Activated T-helper 2 cell treated with anti-CD3 and anti-CD28 coated beads, Interferon-gamma antibody, Interleukin-2, Interleukin-4, amounts not matched to agents 10 μg/mL and 5 μg/mL and 100 μg/mL, durations not matched to agents 14 hours and 24 hours and 36 hours (primary cell): ENCODE measurements at regions of chr5 and their contacts with region 1.

Region 1: DNA sequence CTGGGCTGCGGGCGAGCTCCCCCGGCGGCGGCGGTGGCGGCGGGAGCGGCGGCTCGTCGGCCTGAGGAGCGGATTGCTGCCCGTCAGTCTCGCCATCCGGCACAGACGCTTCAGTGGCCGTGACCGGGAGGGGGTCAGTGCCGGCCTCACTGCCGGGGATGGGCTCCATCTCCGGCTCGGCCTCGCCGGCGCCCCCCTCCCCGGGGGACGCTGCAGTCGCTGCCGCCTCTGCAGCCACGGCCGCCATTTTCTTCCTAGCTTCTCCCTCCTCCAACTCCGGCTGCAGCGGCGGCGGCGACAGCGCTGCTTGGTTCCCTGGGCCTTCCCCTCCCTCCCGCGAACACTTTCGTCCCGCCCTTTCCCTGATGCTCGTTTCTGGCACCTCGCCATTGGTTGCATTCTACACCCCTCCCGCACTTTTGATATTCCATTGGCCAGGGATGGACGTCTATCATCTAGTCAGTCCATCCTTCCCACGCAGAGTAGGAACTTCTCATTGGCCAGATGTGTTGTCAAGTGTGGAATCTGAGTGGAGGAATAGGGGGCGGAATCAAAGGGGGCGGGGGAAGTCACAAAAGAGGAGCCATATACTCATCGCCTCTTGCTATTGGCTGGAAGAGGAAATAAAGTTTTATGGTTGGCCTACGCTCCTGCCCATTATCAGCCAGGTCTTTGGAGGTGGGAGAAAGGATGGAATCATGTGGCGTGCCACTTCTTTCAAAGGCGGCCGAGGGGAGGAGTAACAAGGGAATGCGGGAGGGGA is at the start of gene PWWP2A:
- DNase-seq: peak; percentile 96
- H3K4me3 Mint-ChIP-seq: peak within 1 kb of the TSS; percentile 94
- H3K27ac Mint-ChIP-seq: peak within 1 kb of the TSS; percentile 94
- H3K4me1 Mint-ChIP-seq: peaks cover 13% of the 10 kb centered on the region
- H3K27me3 Mint-ChIP-seq: peaks cover 3% of the 10 kb centered on the region
- total RNA-seq, gene PWWP2A: 20.4 and 22.7 TPM in 2 replicates

Region 2: DNA sequence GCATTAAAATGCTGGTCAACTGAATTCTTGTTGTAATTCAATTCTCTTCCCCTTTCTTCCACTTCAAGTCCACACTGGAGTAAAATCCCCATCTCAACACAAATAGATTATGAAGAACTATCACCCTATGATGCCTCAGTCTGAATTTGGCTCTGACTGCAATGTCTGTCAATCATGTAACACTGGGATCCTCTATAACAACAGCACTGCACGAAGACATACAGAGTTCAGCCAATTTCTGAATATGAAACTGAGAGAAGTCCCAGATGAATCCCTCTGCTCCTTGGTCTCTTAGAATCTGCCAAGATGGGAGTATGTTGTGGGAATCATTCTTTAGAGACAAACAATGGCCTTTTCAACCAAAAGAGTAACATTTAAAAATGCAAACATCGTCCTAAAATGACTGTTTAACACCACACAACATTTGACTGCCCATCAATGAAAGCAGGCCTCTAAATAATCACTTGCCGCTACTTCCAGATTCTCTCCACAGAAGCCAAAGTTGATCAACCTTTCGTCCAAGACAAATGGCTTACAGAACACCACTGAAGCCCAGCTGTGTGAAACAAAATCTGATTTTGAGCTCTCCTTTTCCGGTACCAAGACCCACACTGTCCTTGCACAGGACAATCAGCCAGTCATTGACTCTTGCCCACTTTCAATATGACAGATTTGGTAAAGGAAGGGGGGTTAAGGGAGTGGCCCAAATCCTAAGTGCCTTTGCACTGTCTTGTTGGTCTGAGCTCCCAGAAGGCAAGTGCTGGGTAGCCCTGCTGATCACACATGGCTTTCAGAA is 1277.6 kb before region 1 on chr5:
- intact Hi-C with region 1: no loop called
- DNase-seq: no peak
- H3K4me3 Mint-ChIP-seq: no peak overlapping the region
- H3K27ac Mint-ChIP-seq: no peak overlapping the region
- H3K4me1 Mint-ChIP-seq: no peaks in the 10 kb centered on the region
- H3K27me3 Mint-ChIP-seq: peaks cover 3% of the 10 kb centered on the region

Region 3: DNA sequence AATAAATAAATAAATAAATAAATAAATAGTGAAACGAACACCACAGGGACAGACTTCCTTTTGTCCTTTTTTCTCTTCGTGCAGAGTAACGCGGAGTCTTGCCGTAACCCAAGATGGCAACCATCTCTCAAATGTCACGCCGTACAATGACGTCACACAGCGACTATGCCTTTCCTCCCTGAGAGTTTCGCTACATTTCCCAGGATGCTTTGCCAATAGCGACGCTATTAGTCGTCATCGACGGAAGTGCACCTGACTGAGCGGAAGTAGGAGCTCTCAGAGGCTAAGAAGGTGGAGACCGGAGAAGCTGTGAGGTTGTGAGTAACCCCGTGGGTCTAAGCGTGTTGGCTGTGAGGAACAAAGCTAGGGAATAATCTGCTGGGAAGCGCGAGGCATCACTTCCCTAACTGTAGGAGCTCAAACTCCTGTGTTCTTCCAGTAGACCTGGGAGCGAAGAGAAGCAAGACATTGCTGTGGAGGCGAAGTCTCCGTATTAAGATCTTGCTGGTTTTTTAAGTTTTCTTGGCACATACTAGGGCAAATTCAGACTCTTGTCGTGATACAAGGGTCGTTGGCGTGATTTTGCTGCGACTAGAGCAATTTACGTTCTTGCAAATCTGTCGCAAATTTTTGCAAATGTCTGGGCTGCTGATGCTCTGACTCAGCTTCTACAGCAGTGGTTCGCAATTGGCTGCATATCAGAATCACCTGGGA is 110.3 kb before region 1 on chr5 and contains the start of gene TTC1:
- intact Hi-C with region 1: loop called (anchors 1 kb)
- DNase-seq: peak; percentile 89
- H3K4me3 Mint-ChIP-seq: peak within 1 kb of the TSS; percentile 94
- H3K27ac Mint-ChIP-seq: peak within 1 kb of the TSS; percentile 92
- H3K4me1 Mint-ChIP-seq: peaks cover 19% of the 10 kb centered on the region
- H3K27me3 Mint-ChIP-seq: no peaks in the 10 kb centered on the region
- total RNA-seq, gene TTC1: 64.0 and 64.9 TPM in 2 replicates

Region 4: DNA sequence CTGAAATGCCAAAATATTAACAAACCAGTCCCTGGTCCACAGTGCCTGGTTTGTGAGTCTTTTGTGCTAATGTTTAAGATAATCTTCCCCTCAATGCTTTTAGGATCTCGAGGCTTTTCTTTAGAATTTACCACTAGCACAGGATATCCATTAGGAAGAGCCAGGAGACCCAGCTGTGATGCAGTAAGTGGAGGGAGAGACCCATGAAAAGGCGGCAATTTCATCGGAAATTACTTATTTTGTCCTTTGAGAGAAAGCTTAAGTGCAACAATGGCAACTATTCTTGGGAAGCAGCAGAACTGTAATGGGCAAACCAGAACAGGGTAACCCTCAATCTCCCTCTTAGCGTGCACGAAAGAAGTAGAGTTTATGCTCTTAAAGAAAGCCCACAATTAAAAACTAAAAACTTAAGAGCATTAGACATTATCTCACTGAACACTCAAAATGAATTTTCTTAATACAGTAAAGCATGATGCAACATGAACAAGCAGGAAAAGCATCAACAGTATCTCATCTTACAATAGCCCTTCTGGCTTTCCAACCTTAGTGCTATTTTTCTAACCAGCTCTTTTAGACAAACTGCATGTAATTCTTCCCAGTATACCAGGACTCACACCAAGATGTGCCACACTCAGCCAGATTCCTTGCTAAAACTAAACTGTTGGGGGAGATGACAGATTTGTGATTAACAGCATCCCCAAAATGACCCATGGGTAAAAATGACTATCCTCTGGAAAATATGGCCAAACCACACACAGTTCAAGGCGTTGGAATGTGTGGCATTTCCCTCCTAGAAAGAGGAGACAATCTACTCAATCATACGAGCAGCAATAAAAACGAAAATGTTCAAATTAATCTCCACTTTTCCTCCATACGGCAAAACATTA is 36.5 kb before region 1 on chr5:
- intact Hi-C with region 1: loop called (anchors 5 kb)
- DNase-seq: no peak
- H3K4me3 Mint-ChIP-seq: no peak overlapping the region
- H3K27ac Mint-ChIP-seq: no peak overlapping the region
- H3K4me1 Mint-ChIP-seq: no peaks in the 10 kb centered on the region
- H3K27me3 Mint-ChIP-seq: no peaks in the 10 kb centered on the region

Region 5: GRCh38 chr5:160266752-160267345 is 147.5 kb after region 1 on chr5:
- intact Hi-C with region 1: no loop called
- DNase-seq: no peak
- H3K4me3 Mint-ChIP-seq: no peak overlapping the region
- H3K27ac Mint-ChIP-seq: no peak overlapping the region
- H3K4me1 Mint-ChIP-seq: peaks cover 4% of the 10 kb centered on the region
- H3K27me3 Mint-ChIP-seq: peaks cover 11% of the 10 kb centered on the region

Region 6: GRCh38 chr5:160278343-160278955 is 159.1 kb after region 1 on chr5:
- intact Hi-C with region 1: no loop called
- DNase-seq: no peak
- H3K4me3 Mint-ChIP-seq: no peak overlapping the region
- H3K27ac Mint-ChIP-seq: no peak overlapping the region
- H3K4me1 Mint-ChIP-seq: peaks cover 4% of the 10 kb centered on the region
- H3K27me3 Mint-ChIP-seq: no peaks in the 10 kb centered on the region

Region 7: GRCh38 chr5:160399402-160400353 is 280.4 kb after region 1 on chr5 and contains the start of gene FAM200C:
- intact Hi-C with region 1: loop called (anchors 1 kb)
- DNase-seq: peak; percentile 74
- H3K4me3 Mint-ChIP-seq: peak within 1 kb of the TSS; percentile 90
- H3K27ac Mint-ChIP-seq: peak within 1 kb of the TSS; percentile 54
- H3K4me1 Mint-ChIP-seq: peaks cover 15% of the 10 kb centered on the region
- H3K27me3 Mint-ChIP-seq: no peaks in the 10 kb centered on the region
- total RNA-seq, gene FAM200C: 1.3 and 1.4 TPM in 2 replicates

Region 8: GRCh38 chr5:160418561-160419457 is 299.5 kb after region 1 on chr5 and contains the start of gene SLU7:
- intact Hi-C with region 1: loop called (anchors 1 kb)
- DNase-seq: peak; percentile 91
- H3K4me3 Mint-ChIP-seq: peak within 1 kb of the TSS; percentile 96
- H3K27ac Mint-ChIP-seq: peak within 1 kb of the TSS; percentile 93
- H3K4me1 Mint-ChIP-seq: peaks cover 56% of the 10 kb centered on the region
- H3K27me3 Mint-ChIP-seq: no peaks in the 10 kb centered on the region
- total RNA-seq, gene SLU7: 41.3 and 44.3 TPM in 2 replicates